Head of caudate nucleus (tissue), 42 donors: ENCODE measurements at regions of chr11 and their contacts with region 1.

Region 1: GRCh38 chr11:79259402-79260199 is 181.2 kb downstream of the TENM4 start:
- DNase-seq: no peak

Region 2: GRCh38 chr11:79294845-79295731 is 35.5 kb after region 1 on chr11:
- intact Hi-C with region 1: no loop called
- DNase-seq: no peak

Region 3: DNA sequence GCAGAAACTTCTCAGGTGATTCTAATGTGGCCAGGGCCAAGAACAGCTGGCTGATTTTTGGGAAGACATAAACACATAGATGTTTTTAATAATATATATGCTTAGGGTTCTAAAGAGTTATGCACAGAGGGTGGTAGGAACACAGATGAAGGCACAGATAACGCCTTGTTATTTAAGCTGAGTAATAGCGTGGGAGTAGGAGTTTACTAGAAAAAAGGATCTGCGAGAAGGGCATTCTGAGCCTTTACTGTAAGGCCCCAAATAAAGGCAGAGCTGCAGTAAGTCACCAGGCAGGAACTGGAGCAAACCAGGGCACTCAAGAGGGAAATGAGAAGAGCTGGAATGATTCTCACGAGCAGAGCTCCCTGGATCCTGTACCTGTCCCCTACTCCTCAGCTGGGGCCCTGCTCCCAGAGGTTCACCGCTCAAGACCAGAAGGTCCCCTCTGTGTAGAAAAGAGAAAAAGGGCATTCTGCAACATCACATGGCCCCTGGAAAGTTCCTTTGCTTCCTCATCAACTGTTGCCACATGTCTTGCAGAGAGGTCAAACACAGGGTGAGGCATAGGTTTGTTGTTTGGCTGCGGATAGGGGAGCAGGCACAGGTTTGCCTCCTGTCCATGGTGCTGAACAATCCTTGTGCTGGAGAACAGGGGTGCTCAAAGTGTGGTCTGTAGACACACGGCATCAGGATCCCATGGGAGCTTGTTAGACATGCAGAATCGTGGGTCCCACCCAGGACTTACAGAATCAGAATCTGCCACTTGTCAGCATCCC is 55.5 kb after region 1 on chr11:
- intact Hi-C with region 1: loop called (anchors 5 kb)
- DNase-seq: no peak